ENCODE measurements at regions of chr4 and their contacts with region 1.

Region 1: DNA sequence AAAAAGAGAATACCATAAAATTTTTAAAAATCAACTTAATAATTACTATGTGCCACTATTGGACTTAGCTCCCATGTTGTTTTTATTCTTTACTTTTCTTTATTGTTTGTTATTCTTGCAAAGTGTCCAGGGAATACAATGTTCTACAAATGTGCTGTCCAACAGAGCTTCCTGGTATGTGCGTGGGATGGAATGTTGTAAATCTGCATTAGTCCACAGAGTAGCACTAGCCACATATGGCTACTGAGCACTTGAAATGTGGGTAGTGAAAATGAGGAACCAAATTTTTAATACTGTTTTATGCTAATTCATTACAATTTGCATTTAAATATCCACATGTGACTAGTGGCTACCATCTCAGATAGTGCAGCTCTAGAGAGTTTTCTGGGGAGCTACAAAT is 14.3 kb upstream of the CORIN start:
- DNase-seq: no peak
- H3K4me3 ChIP-seq: no peak overlapping the region
- H3K27ac ChIP-seq: no peak overlapping the region
- H3K4me1 ChIP-seq: no peaks in the 10 kb centered on the region
- H3K27me3 ChIP-seq: no peaks in the 10 kb centered on the region
- CTCF ChIP-seq: no peak

Region 2: GRCh38 chr4:47876784-47877546 is 24.8 kb after region 1 on chr4:
- CTCF ChIA-PET with region 1: interaction called, 7 read pairs
- POLR2A ChIA-PET with region 1: no interaction called
- intact Hi-C with region 1: loop called (anchors 2 kb)
- DNase-seq: no peak
- H3K4me3 ChIP-seq: no peak overlapping the region
- H3K27ac ChIP-seq: no peak overlapping the region
- H3K4me1 ChIP-seq: no peaks in the 10 kb centered on the region
- H3K27me3 ChIP-seq: no peaks in the 10 kb centered on the region
- CTCF ChIP-seq: no peak